ENCODE measurements at regions of chr4 and their contacts with region 1.

Region 1: DNA sequence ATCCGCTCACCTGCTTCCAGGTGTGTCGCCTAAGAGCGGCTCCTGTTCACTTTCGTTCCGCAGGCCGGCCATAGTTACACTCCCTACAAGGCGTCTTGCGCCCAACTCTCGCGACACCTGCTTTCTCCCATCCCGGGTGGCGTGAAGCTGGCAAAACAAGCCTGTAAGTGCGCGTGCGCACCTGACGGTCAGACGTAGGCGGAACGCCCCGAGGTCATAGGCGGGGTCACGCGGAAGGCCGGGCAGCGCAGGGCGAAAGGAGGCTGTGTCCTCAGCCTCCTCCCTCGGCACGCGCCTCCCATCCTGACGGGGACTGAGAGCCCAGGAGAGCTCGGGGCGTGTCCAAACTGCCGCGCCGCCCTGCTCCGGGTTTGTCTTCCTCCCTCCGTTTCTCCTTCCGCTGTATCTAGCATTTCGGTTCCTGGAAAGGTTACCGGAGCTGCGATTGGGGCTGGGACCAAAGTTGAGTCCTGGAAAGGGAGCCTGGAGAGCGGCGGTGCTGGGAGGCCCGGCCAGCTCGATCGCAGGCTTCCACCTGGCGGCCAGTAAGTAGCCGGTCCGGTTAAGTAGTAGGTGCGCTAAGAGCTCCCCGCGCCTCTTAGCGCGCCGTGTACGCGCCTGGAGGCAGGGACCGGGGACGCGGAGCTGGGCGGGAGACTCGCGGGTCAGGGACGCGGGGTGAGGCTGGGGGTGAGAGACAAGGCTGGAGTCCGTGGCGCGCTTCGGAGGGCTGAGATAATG is at the starts of genes ABHD18 and MFSD8:
- DNase-seq: peak; percentile 98
- ATAC-seq: peak; percentile 96
- H3K4me3 ChIP-seq: peak within 1 kb of the TSS; percentile 95
- H3K27ac ChIP-seq: peak within 1 kb of the TSS; percentile 73
- H3K4me1 ChIP-seq: 0 out of 2 replicates have a peak, but pooled peaks cover 5% of the 10 kb centered on the region
- H3K27me3 ChIP-seq: no peaks in the 10 kb centered on the region
- CTCF ChIP-seq: peak; percentile 46; the same call in 1 of the 2 replicates
- total RNA-seq, gene ABHD18: 3.3 and 6.2 TPM in 2 replicates
- total RNA-seq, gene MFSD8: 12.3 and 12.8 TPM in 2 replicates

Region 2: GRCh38 chr4:127782274-127783025 is 182.8 kb before region 1 on chr4 and contains the start of gene HSPA4L:
- CTCF ChIA-PET with region 1: no interaction called
- POLR2A ChIA-PET with region 1: no interaction called
- intact Hi-C with region 1: loop called (anchors 1 kb)
- DNase-seq: peak; percentile 50
- ATAC-seq: peak; percentile 49
- H3K4me3 ChIP-seq: peak within 1 kb of the TSS; percentile 77
- H3K27ac ChIP-seq: peak within 1 kb of the TSS; percentile 32; the same call in 1 of the 2 replicates
- H3K4me1 ChIP-seq: 0 out of 2 replicates have a peak, but pooled peaks cover 7% of the 10 kb centered on the region
- H3K27me3 ChIP-seq: no peaks in the 10 kb centered on the region
- CTCF ChIP-seq: no peak
- total RNA-seq, gene HSPA4L: 8.7 and 9.2 TPM in 2 replicates

Region 3: GRCh38 chr4:128177498-128177897 is 212.3 kb after region 1 on chr4:
- CTCF ChIA-PET with region 1: no interaction called
- POLR2A ChIA-PET with region 1: no interaction called
- intact Hi-C with region 1: no loop called
- DNase-seq: no peak
- ATAC-seq: no peak
- H3K4me3 ChIP-seq: no peak overlapping the region
- H3K27ac ChIP-seq: no peak overlapping the region
- H3K4me1 ChIP-seq: no peaks in the 10 kb centered on the region
- H3K27me3 ChIP-seq: no peaks in the 10 kb centered on the region
- CTCF ChIP-seq: no peak

Region 4: GRCh38 chr4:128220286-128221235 is 255.3 kb after region 1 on chr4:
- CTCF ChIA-PET with region 1: no interaction called
- POLR2A ChIA-PET with region 1: no interaction called
- intact Hi-C with region 1: no loop called
- DNase-seq: peak; percentile 63
- ATAC-seq: peak; percentile 84
- H3K4me3 ChIP-seq: no peak overlapping the region
- H3K27ac ChIP-seq: no peak overlapping the region
- H3K4me1 ChIP-seq: peaks cover 8% of the 10 kb centered on the region
- H3K27me3 ChIP-seq: no peaks in the 10 kb centered on the region
- CTCF ChIP-seq: peak; percentile 58

Measured in PC-3 (cell line).